ENCODE measurements at regions of chr1 and their contacts with region 1.

Region 1: GRCh38 chr1:165954940-165955339 is 127.5 kb downstream of the UCK2 start:
- DNase-seq: no peak
- H3K4me3 ChIP-seq: no peak overlapping the region
- H3K27ac ChIP-seq: no peak overlapping the region
- H3K4me1 ChIP-seq: no peaks in the 10 kb centered on the region
- H3K27me3 ChIP-seq: no peaks in the 10 kb centered on the region
- CTCF ChIP-seq: no peak

Region 2: DNA sequence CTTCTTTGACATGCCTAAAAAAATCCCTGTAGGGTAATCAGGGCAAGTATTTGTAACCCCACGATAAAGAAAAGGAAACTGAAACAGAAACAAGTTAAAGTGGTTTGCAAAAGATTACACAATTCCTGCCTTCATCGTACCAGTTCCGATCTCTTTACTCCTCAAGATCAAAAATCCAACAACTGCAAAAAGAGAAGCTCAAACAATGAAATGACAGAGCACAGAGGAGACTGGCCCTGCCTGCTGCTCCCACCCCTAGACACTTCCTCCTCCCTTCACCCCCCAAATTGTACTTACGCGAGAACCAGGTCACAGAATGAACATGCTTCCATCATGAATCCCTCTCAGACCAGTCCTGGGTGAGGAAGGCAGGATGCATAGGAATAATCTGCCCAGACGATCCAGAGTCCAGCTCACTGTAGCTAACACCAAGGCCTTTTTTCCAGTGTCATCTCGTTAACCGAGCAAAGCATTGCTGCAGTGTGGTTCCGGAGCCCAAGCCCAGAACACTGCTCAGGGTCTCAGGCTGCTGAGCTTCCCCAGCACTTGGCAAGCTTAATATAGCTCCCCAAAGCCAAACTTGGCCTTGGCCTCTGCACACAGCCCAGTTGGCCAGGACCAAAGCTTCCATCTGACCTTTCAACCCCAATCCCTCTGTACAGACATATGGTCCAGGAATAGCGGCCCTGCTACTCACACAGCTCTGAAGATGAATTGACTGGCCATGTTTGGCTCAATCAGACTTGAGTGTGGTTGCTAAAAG is 530.3 kb before region 1 on chr1:
- CTCF ChIA-PET with region 1: no interaction called
- dilution Hi-C with region 1: no loop called
- in situ Hi-C with region 1: no loop called
- intact Hi-C with region 1: no loop called
- DNase-seq: no peak
- H3K4me3 ChIP-seq: no peak overlapping the region
- H3K27ac ChIP-seq: no peak overlapping the region
- H3K4me1 ChIP-seq: no peaks in the 10 kb centered on the region
- H3K27me3 ChIP-seq: no peaks in the 10 kb centered on the region
- CTCF ChIP-seq: no peak

Region 3: GRCh38 chr1:165610885-165611284 is 344.1 kb before region 1 on chr1:
- CTCF ChIA-PET with region 1: no interaction called
- dilution Hi-C with region 1: no loop called
- in situ Hi-C with region 1: no loop called
- intact Hi-C with region 1: no loop called
- DNase-seq: no peak
- H3K4me3 ChIP-seq: no peak overlapping the region
- H3K27ac ChIP-seq: no peak overlapping the region
- H3K4me1 ChIP-seq: no peaks in the 10 kb centered on the region
- H3K27me3 ChIP-seq: no peaks in the 10 kb centered on the region
- CTCF ChIP-seq: no peak

Region 4: DNA sequence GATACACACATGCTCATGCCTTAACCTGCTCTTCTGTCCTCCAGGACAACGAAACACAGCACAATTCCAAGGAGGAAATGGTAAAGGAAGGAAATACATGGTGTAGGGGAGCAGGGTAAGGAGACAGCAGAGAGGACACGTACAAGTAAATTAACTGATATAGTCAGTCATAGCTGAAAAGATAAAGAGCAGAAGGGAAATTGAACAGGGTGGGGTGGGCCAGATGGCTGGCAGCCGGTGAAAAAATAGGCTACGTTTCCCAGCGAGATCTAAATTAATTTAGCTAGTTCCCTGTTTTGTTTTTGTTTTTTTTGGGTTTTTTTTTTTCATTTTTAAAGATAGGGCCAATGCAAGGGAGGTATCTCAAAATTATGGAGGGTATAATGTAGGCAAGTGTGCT is 102.7 kb after region 1 on chr1:
- CTCF ChIA-PET with region 1: no interaction called
- dilution Hi-C with region 1: loop called (anchors 5 kb)
- in situ Hi-C with region 1: no loop called
- intact Hi-C with region 1: no loop called
- DNase-seq: no peak
- H3K4me3 ChIP-seq: no peak overlapping the region
- H3K27ac ChIP-seq: no peak overlapping the region
- H3K4me1 ChIP-seq: no peaks in the 10 kb centered on the region
- H3K27me3 ChIP-seq: peaks cover 1% of the 10 kb centered on the region
- CTCF ChIP-seq: no peak

Measured in mammary epithelial cell (primary cell).